ENCODE measurements at regions of chr12 and their contacts with region 1.

Region 1: DNA sequence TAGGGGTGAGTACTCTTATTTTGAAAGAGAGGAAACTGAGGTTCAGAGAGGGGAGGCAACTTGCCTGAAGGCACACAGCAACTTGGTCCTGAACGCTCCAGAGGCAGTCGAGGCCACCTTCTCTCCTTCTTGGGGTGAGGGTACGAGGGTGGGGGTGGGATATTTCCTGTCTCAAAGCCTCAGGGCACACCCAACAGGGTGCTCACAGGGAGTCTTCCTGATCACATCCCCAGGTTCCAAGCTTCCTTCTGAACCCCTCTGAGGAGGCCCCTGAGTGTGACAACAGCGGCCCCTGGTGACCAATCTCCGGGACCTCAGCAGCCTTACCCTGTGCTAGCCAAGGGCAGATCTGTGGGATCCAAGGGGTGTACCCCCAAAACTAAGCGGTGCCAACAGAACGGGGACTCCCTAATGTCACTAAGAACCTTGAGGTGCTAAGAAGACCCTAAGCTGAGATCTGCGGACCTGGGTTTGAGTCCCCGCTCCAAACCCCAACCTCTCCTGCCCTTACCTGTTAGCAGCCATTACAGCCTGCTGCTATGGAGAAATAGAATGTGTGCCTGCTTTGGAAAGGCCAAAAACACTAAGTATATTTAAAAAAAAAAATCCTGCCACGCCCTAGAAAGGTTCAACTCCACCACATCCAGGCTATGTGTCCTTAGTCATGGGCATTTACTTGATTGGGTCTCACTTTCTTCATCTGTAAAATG is 57.9 kb downstream of the TRPV4 start:
- DNase-seq: peak; percentile 66 to 90 (median 74)
- ATAC-seq: peak; percentile 93
- H3K4me3 ChIP-seq: no peak overlapping the region
- H3K27ac ChIP-seq: no peak overlapping the region
- H3K4me1 ChIP-seq: peaks cover 0 to 9% of the 10 kb centered on the region in 2 donors
- H3K27me3 ChIP-seq: no peaks in the 10 kb centered on the region
- CTCF ChIP-seq: peak; percentile 70 to 83

Region 2: DNA sequence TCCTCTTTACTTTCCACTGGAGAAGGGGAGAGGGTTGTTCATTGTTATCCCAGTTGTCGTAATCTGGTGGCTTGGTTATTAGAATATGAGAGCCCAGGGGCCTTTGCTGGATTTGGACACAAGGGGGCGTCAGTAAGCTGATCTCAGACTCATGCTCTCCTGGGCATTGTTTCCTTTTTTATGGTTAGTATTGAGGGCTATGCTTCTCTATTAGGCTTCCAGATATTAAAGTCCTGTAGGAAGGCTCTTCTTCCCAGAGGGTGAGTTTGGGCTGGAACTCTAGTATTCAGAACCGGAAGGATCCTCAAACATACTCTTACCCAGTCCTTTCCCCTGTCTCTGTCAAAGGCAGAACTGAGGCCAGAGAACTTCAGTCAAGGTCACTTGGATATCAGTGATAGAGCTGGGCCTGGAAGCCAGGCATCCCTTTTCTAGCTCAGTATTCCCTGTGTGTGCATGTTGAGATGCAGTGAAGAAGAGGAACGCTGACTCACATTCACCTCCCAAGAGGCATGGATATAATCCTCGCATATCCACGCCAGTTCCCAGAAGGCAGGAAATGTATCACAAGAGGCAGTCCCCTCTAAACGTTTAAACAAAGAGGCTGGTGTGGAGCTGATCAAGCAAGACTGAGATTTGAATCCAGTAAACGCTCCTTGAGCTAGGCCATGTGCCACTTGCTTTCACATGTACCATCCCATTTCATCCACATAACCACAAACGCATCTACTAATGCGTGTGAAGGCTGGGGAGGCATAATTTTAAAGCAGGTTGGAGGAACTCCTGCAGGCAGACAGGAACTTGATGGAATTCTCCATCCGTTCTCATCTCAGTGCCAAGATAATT is 256.3 kb before region 1 on chr12:
- intact Hi-C with region 1: loop called in 1 of 2 experiments (anchors 10 kb)
- DNase-seq: peak in 2 of 4 donors; percentile 24 to 48
- ATAC-seq: peak; percentile 81
- H3K4me3 ChIP-seq: no peak overlapping the region
- H3K27ac ChIP-seq: no peak overlapping the region
- H3K4me1 ChIP-seq: no peaks in the 10 kb centered on the region
- H3K27me3 ChIP-seq: no peaks in the 10 kb centered on the region
- CTCF ChIP-seq: peak; percentile 74 to 77

Region 3: DNA sequence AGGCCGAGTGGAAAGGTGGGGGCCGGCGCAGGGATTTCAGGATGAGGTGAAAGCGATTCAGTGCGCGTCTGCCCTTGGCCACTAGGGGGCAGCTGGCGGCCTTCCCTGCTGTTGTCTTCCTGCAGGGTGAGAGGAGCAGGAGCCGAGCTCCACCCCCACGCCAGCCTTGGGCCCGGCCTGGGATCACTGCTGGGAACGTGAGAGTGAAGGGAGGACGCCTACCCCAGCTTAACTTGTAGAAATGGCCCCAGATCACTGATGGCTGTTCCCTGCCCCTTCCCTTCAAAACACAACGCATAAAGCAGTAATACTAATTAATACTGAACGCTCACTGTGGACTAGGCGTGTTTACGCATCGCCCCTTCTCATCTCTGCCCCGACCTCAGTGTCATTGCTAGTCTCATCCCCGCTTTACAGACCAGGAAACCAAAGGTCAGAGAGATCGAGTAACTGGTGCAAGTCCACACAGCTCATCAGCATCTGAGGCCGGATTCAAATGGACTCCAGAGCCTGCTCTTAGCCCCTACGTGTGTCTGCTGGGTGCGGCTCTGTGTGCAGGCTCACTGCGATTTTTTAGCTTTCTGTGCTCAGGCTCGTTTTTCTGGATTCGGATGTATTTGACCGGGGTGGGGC is 177.4 kb before region 1 on chr12:
- intact Hi-C with region 1: loop called (anchors 2 to 10 kb)
- DNase-seq: peak; percentile 74 to 95 (median 86)
- ATAC-seq: peak; percentile 99
- H3K4me3 ChIP-seq: no peak overlapping the region
- H3K27ac ChIP-seq: no peak overlapping the region
- H3K4me1 ChIP-seq: peaks cover 4 to 21% of the 10 kb centered on the region in 2 donors
- H3K27me3 ChIP-seq: peaks cover 0 to 6% of the 10 kb centered on the region in 2 donors
- CTCF ChIP-seq: peak; percentile 86 to 93